ENCODE measurements at regions of chr6 and their contacts with region 1.

Region 1: DNA sequence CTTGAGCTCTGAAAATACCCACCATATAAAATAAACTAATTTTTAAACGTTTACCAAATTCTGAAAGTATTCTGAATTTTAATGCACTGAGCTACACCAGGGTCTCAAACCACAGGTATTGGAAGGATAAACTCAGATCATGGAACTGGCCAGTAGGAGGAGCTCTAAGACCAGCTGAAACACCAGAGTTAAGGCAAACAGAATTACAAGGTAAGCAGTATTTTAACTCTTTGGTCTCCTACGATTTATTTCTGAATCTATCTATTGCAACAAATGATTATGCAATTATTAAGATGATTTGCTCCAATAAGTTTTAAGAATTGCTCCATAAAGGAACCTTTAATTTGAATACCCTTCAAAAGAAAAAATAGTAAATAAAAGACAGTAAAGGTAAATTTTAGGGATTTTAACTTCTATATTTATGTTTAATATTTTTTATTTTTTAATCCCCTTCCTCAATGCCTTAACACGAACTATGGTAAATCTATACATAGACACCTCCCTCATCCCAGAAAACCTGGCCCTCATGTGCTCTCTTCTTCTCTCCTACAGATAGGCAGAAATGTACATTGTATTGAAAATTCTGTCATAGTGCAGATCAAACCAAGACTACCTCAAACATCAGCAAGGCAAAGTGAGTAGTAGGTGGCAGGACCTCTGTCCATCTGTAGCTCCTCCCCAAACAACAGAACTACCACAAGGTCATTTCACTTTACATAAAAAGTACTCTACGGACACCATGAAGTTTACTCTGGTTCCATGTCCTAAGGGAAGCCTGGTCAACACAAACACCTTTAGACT is 58.4 kb downstream of the SMLR1 start:
- DNase-seq: peak; percentile 45
- ATAC-seq: peak; percentile 98
- H3K4me3 ChIP-seq: no peak overlapping the region
- H3K27ac ChIP-seq: no peak overlapping the region
- H3K4me1 ChIP-seq: no peaks in the 10 kb centered on the region
- H3K27me3 ChIP-seq: no peaks in the 10 kb centered on the region
- CTCF ChIP-seq: peak; percentile 76 to 92 (median 88)
- EP300 ChIP-seq: no peak
- POLR2A ChIP-seq: no peak
- RAD21 ChIP-seq: peak; percentile 99

Region 2: DNA sequence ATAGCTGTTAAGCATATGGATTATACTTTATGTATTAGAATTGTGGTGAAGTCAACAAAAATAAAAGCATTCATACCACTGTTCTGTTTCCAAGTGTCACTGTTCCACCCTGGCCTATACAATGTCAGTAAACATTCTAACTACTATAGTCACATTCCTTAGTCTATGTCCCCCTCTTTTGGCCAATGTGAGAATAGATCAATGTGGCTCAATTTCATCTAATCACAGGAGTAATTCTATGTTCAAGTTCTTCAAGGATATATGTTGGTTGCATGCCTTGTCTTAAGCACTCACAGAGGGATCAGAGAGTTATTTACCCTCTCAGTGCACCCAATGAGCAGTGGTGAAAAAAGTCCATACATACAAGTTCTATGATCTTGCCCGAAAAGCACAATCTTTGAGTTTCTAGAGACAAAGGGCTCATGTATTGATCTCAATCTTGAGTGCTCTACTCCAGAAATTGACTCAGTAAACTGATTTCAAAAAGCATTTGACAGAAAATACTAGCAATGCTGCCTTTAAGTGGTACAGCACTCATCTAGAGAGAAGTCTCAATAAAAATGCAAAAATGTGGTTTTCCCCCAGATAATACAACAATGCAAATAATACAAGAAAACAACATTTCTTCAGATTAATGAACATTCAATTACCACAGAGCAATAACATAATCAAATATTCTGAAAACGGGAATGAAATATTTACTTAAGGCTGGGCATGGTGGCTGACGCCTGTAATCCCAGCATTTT is 41.8 kb before region 1 on chr6:
- CTCF ChIA-PET with region 1: no interaction called
- POLR2A ChIA-PET with region 1: no interaction called
- RAD21 ChIA-PET with region 1: no interaction called
- SMC1A ChIA-PET with region 1: no interaction called
- in situ Hi-C with region 1: no loop called
- intact Hi-C with region 1: no loop called
- DNase-seq: peak; percentile 9
- ATAC-seq: peak; percentile 86
- H3K4me3 ChIP-seq: no peak overlapping the region
- H3K27ac ChIP-seq: no peak overlapping the region
- H3K4me1 ChIP-seq: no peaks in the 10 kb centered on the region
- H3K27me3 ChIP-seq: no peaks in the 10 kb centered on the region
- CTCF ChIP-seq: peak; percentile 49 to 75 (median 62); a peak in 5 of 6 replicates
- EP300 ChIP-seq: no peak
- POLR2A ChIP-seq: no peak
- RAD21 ChIP-seq: peak; percentile 84

Region 3: GRCh38 chr6:130872250-130873095 is 13.1 kb before region 1 on chr6:
- CTCF ChIA-PET with region 1: interaction called, 35 read pairs
- POLR2A ChIA-PET with region 1: interaction called, 6 read pairs
- RAD21 ChIA-PET with region 1: interaction called, 3 read pairs
- SMC1A ChIA-PET with region 1: interaction called, 3 read pairs
- in situ Hi-C with region 1: no loop called
- intact Hi-C with region 1: no loop called
- DNase-seq: no peak
- ATAC-seq: peak; percentile 93
- H3K4me3 ChIP-seq: no peak overlapping the region
- H3K27ac ChIP-seq: no peak overlapping the region
- H3K4me1 ChIP-seq: no peaks in the 10 kb centered on the region
- H3K27me3 ChIP-seq: no peaks in the 10 kb centered on the region
- CTCF ChIP-seq: peak; percentile 81 to 92 (median 90)
- EP300 ChIP-seq: no peak
- POLR2A ChIP-seq: no peak
- RAD21 ChIP-seq: peak; percentile 66

Region 4: GRCh38 chr6:131063028-131063763 is 177.6 kb after region 1 on chr6 and contains the start of gene EPB41L2:
- CTCF ChIA-PET with region 1: interaction called, 4 read pairs
- POLR2A ChIA-PET with region 1: no interaction called
- RAD21 ChIA-PET with region 1: interaction called, 4 read pairs
- SMC1A ChIA-PET with region 1: interaction called, 12 read pairs
- in situ Hi-C with region 1: no loop called
- intact Hi-C with region 1: loop called (anchors 2 kb)
- DNase-seq: peak; percentile 26
- ATAC-seq: peak; percentile 82
- H3K4me3 ChIP-seq: peak within 1 kb of the TSS; percentile 88
- H3K27ac ChIP-seq: peak within 1 kb of the TSS; percentile 67
- H3K4me1 ChIP-seq: peaks cover 6% of the 10 kb centered on the region
- H3K27me3 ChIP-seq: no peaks in the 10 kb centered on the region
- CTCF ChIP-seq: no peak
- EP300 ChIP-seq: no peak
- POLR2A ChIP-seq: peak; percentile 92
- RAD21 ChIP-seq: 0 out of 2 replicates have a peak, but pooled peaks have one; percentile 14
- polyA plus RNA-seq, gene EPB41L2: 7.4 to 10.3 TPM

Region 5: GRCh38 chr6:131167773-131168172 is 282.2 kb after region 1 on chr6:
- CTCF ChIA-PET with region 1: interaction called, 15 read pairs
- POLR2A ChIA-PET with region 1: no interaction called
- RAD21 ChIA-PET with region 1: interaction called, 8 read pairs
- SMC1A ChIA-PET with region 1: interaction called, 10 read pairs
- in situ Hi-C with region 1: no loop called
- intact Hi-C with region 1: loop called (anchors 2 kb)
- DNase-seq: no peak
- ATAC-seq: no peak
- H3K4me3 ChIP-seq: no peak overlapping the region
- H3K27ac ChIP-seq: no peak overlapping the region
- H3K4me1 ChIP-seq: no peaks in the 10 kb centered on the region
- H3K27me3 ChIP-seq: no peaks in the 10 kb centered on the region; a peak in 1 of 4 replicates
- CTCF ChIP-seq: no peak; a peak in 1 of 6 replicates
- EP300 ChIP-seq: no peak
- POLR2A ChIP-seq: no peak
- RAD21 ChIP-seq: peak; percentile 6; the same call in 1 of the 2 replicates

Region 6: DNA sequence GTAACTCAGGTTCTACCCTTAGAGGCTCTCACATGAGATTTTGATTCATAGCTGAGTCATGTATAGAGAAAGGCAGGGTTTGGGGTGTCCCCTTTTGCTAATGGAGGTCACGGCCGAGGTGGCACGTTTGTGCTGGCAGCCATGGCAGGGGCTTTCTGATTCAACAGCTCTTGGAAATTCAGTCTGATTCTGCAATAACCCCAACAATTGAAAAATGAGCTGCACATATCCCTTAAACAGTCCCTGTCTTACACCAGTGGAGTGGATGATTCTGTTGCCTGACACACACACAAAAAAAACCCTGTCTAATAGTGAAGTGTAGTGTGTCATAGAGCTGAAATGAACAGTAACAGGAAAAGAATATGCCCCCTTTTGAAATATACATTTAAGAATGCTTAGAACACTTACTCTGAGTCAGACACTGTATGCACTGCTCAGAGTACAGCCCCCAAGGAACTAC is 647.0 kb after region 1 on chr6:
- CTCF ChIA-PET with region 1: interaction called, 39 read pairs
- POLR2A ChIA-PET with region 1: no interaction called
- RAD21 ChIA-PET with region 1: interaction called, 33 read pairs
- SMC1A ChIA-PET with region 1: interaction called, 9 read pairs
- in situ Hi-C with region 1: loop called (anchors 10 kb)
- intact Hi-C with region 1: loop called (anchors 1 kb)
- DNase-seq: peak; percentile 23
- ATAC-seq: peak; percentile 93
- H3K4me3 ChIP-seq: no peak overlapping the region
- H3K27ac ChIP-seq: no peak overlapping the region
- H3K4me1 ChIP-seq: no peaks in the 10 kb centered on the region
- H3K27me3 ChIP-seq: no peaks in the 10 kb centered on the region
- CTCF ChIP-seq: no peak
- EP300 ChIP-seq: no peak
- POLR2A ChIP-seq: no peak
- RAD21 ChIP-seq: no peak